Heart left ventricle (tissue), 16 donors: ENCODE measurements at regions of chr10 and their contacts with region 1.

Region 1: GRCh38 chr10:45211576-45211975 is 103.8 kb downstream of the OR13A1 start:
- DNase-seq: no peak
- ATAC-seq: no peak
- H3K4me3 ChIP-seq: no peak overlapping the region
- H3K27ac ChIP-seq: no peak overlapping the region
- H3K4me1 ChIP-seq: no peaks in the 10 kb centered on the region
- H3K27me3 ChIP-seq: no peaks in the 10 kb centered on the region
- CTCF ChIP-seq: no peak
- POLR2A ChIP-seq: no peak

Region 2: DNA sequence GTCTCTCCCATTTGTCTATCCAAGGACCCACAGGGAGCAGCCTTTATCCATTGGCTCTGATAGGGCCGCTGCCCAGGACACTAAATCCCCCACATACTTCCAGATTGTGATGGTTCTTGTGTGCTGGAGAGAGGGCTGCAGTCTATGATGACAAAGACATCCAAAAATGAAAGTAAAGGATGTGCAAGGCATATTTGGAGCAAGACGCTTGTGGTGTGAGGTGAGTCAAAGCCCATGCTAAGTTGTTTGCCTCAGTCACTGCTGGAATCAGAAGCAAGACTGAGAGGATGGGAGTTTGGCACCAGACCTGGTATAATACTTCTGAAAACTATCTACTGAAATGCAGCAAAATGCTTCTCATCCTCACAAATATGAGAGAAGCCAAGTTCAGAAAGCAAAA is 188.2 kb before region 1 on chr10:
- intact Hi-C with region 1: loop called in 1 of 10 experiments (anchors 10 kb)
- DNase-seq: no peak
- ATAC-seq: no peak
- H3K4me3 ChIP-seq: no peak overlapping the region
- H3K27ac ChIP-seq: no peak overlapping the region
- H3K4me1 ChIP-seq: no peaks in the 10 kb centered on the region
- H3K27me3 ChIP-seq: no peaks in the 10 kb centered on the region
- CTCF ChIP-seq: no peak
- POLR2A ChIP-seq: no peak

Region 3: DNA sequence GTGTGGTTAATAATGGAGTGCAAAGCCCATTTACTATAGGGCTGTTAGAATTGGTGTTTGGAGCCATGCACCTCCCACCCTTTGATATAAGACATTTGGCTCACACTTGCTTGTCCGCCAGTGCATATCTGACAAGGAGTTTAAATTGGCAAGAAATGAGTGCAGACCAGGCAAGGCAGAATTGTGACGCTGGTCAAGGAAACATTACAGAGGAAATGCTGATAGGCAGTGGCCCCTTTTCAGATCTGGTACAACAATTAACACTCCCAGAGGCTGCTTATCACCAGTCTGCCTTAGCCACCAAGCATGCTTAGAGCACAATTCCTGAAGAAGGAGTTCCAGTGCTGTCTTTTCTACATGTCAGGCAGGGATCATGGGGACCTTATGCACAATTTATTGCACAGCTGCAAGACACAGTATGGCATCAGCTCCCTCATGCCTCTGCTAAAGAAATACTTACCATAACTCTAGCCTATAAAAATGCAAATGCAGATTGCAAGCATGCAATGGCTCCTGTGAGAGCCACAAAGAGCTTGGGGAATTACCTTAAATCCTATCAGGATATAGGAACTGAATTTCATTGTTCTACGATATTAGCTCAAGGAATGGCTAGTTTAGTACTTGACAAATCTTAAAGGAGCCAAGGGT is 68.7 kb after region 1 on chr10:
- intact Hi-C with region 1: no loop called
- DNase-seq: peak in 1 of 5 donors; percentile 10
- ATAC-seq: peak in 3 of 4 donors; percentile 20 to 83 (median 71)
- H3K4me3 ChIP-seq: no peak overlapping the region
- H3K27ac ChIP-seq: peak overlapping the region in 1 of 12 donors; percentile 9
- H3K4me1 ChIP-seq: peaks cover 0 to 15% (median 0%) of the 10 kb centered on the region in 12 donors
- H3K27me3 ChIP-seq: peaks cover 0 to 4% (median 0%) of the 10 kb centered on the region in 9 donors
- CTCF ChIP-seq: no peak
- POLR2A ChIP-seq: no peak